HEK293 (cell line): ENCODE measurements at regions of chr6 and their contacts with region 1.

Region 1: DNA sequence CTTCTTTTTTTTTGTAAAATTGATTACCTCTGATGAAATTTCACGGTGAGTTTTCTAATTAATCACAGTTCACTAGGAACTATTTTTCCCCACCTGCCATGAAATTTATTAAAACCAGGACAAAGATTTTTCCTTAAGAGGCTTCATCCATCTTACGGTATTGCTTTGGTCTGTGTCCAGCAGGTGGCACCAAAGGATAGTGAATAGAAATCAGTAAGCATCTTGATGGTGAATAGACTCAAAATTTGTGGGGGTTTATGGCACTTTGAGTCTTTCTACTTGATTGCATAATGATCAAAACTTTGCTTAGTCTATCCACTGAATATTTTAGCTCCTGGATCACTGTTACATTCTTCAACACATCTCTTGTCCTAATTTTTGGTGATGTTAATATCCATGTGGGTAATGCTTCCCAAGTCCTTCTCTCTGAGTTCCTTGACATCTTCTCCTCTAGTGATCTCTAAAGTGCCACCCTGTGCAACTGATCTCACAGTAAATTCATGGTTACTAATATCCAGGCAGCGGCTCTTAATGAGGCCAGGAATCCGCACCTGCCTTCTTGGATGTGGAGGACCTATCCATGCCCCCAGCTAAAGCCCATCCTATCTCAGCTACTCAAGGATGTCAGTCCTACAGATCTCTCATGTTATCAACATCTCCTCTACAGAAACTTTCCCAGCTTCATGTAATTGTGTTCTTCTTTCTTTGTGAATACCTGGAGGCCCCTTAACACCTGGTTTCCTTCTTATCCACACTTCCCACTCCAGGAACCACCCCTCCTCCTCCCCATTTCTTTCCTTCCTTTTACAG is 54.5 kb downstream of the STMND1 start:
- H3K4me3 ChIP-seq: no peak overlapping the region
- H3K27ac ChIP-seq: no peak overlapping the region
- H3K4me1 ChIP-seq: no peaks in the 10 kb centered on the region
- CTCF ChIP-seq: no peak; the same call in 1 of the 2 replicates

Region 2: DNA sequence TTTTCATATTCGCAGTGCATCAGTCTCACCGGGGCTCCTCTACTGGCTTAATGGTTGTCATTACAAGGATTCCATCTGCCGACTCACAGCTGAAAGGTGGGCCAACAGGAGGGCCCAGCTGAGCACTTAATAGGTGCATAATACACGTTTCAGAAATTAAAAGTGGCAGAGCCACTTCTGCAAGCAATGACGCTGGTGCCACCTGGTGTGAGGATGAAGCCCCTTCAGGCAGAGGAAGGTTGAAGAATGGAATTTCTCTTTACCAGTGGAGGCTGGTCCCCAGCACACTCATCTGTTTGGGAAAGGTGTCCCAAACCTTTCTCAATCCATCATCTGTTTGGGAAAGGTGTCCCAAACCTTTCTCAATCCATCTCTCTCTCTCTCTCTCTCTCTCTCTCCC is 62.6 kb before region 1 on chr6:
- CTCF ChIA-PET with region 1: no interaction called
- POLR2A ChIA-PET with region 1: no interaction called
- H3K4me3 ChIP-seq: no peak overlapping the region
- H3K27ac ChIP-seq: no peak overlapping the region
- H3K4me1 ChIP-seq: peaks cover 7% of the 10 kb centered on the region; the same call in 1 of the 2 replicates
- CTCF ChIP-seq: peak; percentile 45; the same call in 1 of the 2 replicates

Region 3: DNA sequence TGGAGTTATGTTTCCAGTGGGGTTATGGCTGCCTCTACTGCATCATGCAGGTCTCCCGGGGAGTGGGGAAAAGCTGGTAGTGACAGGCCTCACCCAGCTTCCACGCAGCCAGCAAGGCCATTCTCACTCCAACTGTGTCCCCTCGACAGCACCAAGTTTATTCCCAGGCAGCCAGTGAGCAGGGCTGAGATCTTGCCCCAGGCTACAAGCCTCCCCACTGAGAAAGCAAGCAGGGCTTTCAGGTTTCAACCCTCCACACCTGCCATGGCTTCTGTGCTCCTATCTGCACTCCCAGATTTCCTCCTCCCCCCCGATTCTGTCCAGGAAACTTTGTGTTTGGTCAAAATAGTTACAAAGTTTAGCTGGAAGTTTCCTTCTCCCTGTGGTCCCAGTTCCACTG is 11.2 kb before region 1 on chr6:
- CTCF ChIA-PET with region 1: interaction called, 11 read pairs
- POLR2A ChIA-PET with region 1: no interaction called
- H3K4me3 ChIP-seq: no peak overlapping the region
- H3K27ac ChIP-seq: no peak overlapping the region
- H3K4me1 ChIP-seq: no peaks in the 10 kb centered on the region
- CTCF ChIP-seq: no peak

Region 4: DNA sequence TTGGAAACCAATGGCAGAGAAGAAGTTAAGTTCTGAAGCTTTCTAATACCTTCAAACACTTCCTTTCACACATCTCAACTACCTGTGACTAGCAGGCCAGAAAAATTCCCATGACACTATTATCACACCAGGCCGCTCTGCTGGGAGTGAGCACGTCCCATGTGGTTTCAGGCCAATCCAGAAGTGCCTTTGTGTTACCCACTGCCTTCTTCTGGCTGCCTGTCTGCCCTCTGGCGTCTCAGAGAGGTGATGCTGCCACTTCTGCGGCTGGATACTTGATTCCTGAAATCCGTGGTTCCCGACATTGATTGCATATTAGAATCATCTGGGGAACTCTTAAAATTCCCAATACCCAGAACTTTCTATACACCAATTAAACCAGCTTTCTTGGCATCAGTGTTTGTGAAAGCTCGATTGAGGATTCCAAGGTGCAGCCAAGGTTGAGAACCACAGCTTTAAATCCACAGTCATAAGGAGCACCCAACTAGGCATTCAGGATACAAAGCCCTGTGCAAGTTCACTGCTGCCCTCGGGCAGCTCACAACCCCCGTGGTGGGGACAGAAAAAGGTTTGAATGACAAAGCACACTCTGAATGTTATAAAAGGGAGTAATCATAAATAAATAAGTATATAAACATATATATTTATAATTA is 11.1 kb after region 1 on chr6:
- CTCF ChIA-PET with region 1: interaction called, 10 read pairs
- POLR2A ChIA-PET with region 1: no interaction called
- H3K4me3 ChIP-seq: no peak overlapping the region
- H3K27ac ChIP-seq: no peak overlapping the region
- H3K4me1 ChIP-seq: no peaks in the 10 kb centered on the region
- CTCF ChIP-seq: peak; percentile 51; the same call in 1 of the 2 replicates

Region 5: DNA sequence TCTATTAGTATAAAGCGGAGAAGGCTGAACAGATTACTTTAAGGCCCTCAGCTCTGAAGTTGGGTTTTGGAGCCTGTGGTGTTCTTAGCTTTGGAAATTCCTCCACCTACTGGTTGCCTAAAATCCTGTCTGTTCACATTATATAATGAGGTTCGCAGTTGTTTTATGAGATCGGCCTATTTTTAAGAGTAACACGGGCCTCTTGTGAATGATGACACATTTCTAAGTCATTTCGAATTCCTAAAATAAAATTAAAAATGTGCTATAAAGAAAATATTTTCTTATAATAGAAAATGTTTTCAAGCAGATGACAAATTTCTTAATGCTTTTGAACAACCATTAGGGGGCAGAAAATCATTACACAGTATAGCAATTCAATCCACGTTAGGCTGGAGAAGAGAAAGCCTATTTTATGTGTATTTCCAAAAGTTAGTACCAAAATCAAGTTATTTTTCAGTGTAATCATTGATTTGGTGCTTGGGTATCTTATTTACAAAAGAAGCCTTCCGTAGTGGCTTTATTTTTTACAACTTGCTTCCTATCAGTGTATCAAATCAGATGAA is 428.0 kb after region 1 on chr6:
- CTCF ChIA-PET with region 1: interaction called, 75 read pairs
- POLR2A ChIA-PET with region 1: no interaction called
- H3K4me3 ChIP-seq: no peak overlapping the region
- H3K27ac ChIP-seq: no peak overlapping the region
- H3K4me1 ChIP-seq: peaks cover 2% of the 10 kb centered on the region; the same call in 1 of the 2 replicates
- CTCF ChIP-seq: peak; percentile 83